T-cell (primary cell): ENCODE measurements at regions of chr6 and their contacts with region 1.

Region 1: DNA sequence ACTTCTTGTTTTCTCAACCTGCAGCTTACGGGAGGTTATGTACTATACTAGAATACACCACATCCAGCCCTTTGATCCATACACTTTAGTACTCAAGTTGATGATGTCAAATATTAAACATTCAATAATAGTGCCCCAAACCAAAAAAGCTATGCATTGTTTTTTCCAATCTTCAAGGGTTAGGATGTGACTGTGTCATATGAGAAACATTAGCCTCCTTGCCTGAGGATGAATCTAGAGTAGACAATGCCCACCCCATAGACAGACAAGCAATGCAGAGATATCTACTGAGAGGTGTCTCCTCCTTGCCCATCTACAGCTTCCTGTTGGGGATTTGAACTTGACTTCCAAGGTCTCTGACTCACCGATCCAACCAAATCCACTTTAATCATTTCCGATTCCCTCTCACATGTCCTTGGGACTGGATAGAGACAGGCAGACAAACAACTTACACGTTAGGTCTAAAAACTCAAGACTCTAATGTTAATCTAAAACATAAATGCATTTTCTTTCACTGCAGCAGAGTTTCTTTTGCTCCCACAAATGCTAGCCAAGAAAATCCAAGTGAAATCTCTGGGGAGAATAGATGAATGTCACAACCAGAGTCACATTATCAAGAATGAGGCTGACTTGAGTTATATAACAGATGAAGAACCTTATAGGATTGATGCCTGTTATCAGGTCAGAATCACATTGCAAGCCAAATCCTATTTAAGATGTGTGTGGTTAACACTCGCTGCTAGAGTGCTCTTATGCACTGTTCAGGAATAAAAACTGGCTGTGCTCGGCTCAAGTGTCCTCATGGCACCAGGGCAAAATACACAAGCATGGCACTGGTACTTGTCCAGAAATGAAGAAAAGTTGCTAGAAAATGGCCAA is 75.5 kb upstream of the TNFAIP3 start:
- DNase-seq: no peak
- ATAC-seq: peak in 1 of 4 experiments; percentile 26
- H3K4me3 ChIP-seq: no peak overlapping the region
- H3K4me3 Mint-ChIP-seq: peak overlapping the region in 2 of 3 donors; percentile 28 to 48
- H3K27ac ChIP-seq: peak overlapping the region; percentile 17
- H3K27ac Mint-ChIP-seq: peak overlapping the region; percentile 23 to 51
- H3K4me1 ChIP-seq: peaks cover 17 to 25% of the 10 kb centered on the region in 2 experiments
- H3K4me1 Mint-ChIP-seq: peaks cover 49 to 64% (median 57%) of the 10 kb centered on the region in 3 donors
- H3K27me3 ChIP-seq: no peaks in the 10 kb centered on the region
- H3K27me3 Mint-ChIP-seq: no peaks in the 10 kb centered on the region

Region 2: GRCh38 chr6:137765059-137765458 is 26.5 kb before region 1 on chr6:
- CTCF ChIA-PET with region 1: no interaction called
- POLR2A ChIA-PET with region 1: interaction called, 3 to 10 read pairs
- DNase-seq: no peak
- ATAC-seq: no peak
- H3K4me3 ChIP-seq: no peak overlapping the region
- H3K4me3 Mint-ChIP-seq: no peak overlapping the region
- H3K27ac ChIP-seq: no peak overlapping the region
- H3K27ac Mint-ChIP-seq: no peak overlapping the region
- H3K4me1 ChIP-seq: peaks cover 14 to 17% of the 10 kb centered on the region in 2 experiments
- H3K4me1 Mint-ChIP-seq: peaks cover 26 to 39% (median 34%) of the 10 kb centered on the region in 3 donors
- H3K27me3 ChIP-seq: no peaks in the 10 kb centered on the region
- H3K27me3 Mint-ChIP-seq: no peaks in the 10 kb centered on the region